Spleen (tissue), 13 donors: ENCODE measurements at regions of chr1 and their contacts with region 1.

Region 1: GRCh38 chr1:218330043-218330623 is 15.0 kb upstream of the TGFB2 start:
- DNase-seq: no peak
- H3K4me3 ChIP-seq: no peak overlapping the region
- H3K27ac ChIP-seq: no peak overlapping the region
- H3K4me1 ChIP-seq: no peaks in the 10 kb centered on the region
- H3K27me3 ChIP-seq: no peaks in the 10 kb centered on the region
- CTCF ChIP-seq: peak; percentile 31 to 79 (median 66)
- POLR2A ChIP-seq: no peak

Region 2: GRCh38 chr1:218281275-218281674 is 48.9 kb before region 1 on chr1:
- intact Hi-C with region 1: no loop called
- DNase-seq: no peak
- H3K4me3 ChIP-seq: no peak overlapping the region
- H3K27ac ChIP-seq: no peak overlapping the region
- H3K4me1 ChIP-seq: peaks cover 5 to 17% (median 13%) of the 10 kb centered on the region in 6 donors
- H3K27me3 ChIP-seq: peaks cover 0 to 8% (median 0%) of the 10 kb centered on the region in 7 donors
- CTCF ChIP-seq: no peak
- POLR2A ChIP-seq: no peak

Region 3: DNA sequence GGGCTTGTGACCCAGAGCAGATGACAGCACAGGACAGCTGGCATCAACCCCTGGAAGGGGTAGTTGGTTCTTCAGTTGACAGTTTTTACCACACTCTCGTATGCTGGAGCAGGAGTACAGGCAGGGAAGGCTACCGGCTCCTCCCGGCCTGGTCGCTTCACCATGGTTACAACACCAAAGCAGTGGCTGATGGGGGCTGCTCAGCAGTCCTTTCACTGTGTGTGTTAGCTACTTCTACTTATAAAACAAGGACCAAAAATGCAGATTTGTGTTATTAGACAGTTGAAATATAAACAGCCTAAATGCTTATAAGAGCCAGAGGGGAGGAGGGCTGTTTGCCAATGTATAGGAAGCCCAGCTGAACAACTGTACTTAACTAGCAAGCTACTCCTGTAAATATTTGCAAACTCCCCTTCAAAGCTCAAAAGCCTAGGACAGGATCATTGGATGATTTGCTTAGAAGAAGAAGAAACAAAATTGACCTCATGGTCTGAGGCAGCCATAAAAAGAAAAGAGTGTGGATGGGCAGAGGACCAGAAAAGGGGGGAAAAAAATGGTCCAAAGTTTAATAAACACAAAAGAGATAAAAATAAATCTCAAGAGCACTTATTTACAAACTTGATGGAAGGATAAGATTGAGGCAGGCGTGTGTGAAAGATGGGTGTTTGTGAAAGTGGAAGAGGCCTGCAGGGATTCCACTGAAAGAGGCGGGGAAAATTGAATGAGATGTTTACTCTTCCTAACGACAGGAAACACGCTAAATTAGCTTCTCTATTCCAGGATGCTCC is 72.1 kb after region 1 on chr1:
- intact Hi-C with region 1: no loop called
- DNase-seq: no peak
- H3K4me3 ChIP-seq: no peak overlapping the region
- H3K27ac ChIP-seq: no peak overlapping the region
- H3K4me1 ChIP-seq: no peaks in the 10 kb centered on the region
- H3K27me3 ChIP-seq: no peaks in the 10 kb centered on the region
- CTCF ChIP-seq: no peak
- POLR2A ChIP-seq: no peak

Region 4: GRCh38 chr1:218521375-218522169 is 191.4 kb after region 1 on chr1:
- intact Hi-C with region 1: no loop called
- DNase-seq: no peak
- H3K4me3 ChIP-seq: no peak overlapping the region
- H3K27ac ChIP-seq: no peak overlapping the region
- H3K4me1 ChIP-seq: no peaks in the 10 kb centered on the region
- H3K27me3 ChIP-seq: peaks cover 0 to 13% (median 0%) of the 10 kb centered on the region in 7 donors
- CTCF ChIP-seq: peak in 10 of 11 experiments; percentile 25 to 71 (median 54)
- POLR2A ChIP-seq: no peak

Region 5: DNA sequence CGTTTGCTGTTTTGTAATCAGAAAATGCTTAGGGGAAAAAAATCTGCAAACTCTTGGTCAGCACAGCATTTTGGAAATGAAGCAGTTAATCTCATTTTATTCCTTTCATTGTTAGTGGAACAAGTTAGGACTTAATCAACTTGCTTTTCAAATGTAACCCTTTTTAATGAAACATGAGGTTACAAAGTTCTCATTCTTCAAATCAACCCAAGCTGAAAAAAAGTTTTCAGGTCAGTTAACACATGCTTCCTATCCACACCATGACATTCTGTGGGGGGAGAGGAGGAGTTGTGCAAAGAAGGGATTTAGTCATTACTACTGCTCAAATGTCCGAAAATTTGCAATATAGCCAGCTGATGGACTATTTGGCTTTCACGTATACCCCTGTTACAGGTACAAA is 560.3 kb after region 1 on chr1:
- intact Hi-C with region 1: no loop called
- DNase-seq: no peak
- H3K4me3 ChIP-seq: no peak overlapping the region
- H3K27ac ChIP-seq: no peak overlapping the region
- H3K4me1 ChIP-seq: no peaks in the 10 kb centered on the region
- H3K27me3 ChIP-seq: no peaks in the 10 kb centered on the region
- CTCF ChIP-seq: no peak
- POLR2A ChIP-seq: no peak

Region 6: GRCh38 chr1:219416594-219417238 is 1086.6 kb after region 1 on chr1:
- intact Hi-C with region 1: loop called (anchors 10 kb)
- DNase-seq: no peak
- H3K4me3 ChIP-seq: no peak overlapping the region
- H3K27ac ChIP-seq: no peak overlapping the region
- H3K4me1 ChIP-seq: no peaks in the 10 kb centered on the region
- H3K27me3 ChIP-seq: no peaks in the 10 kb centered on the region
- CTCF ChIP-seq: peak in 10 of 11 experiments; percentile 29 to 73 (median 60)
- POLR2A ChIP-seq: no peak

Region 7: GRCh38 chr1:219812491-219813203 is 1482.5 kb after region 1 on chr1:
- intact Hi-C with region 1: loop called (anchors 5 kb)
- DNase-seq: no peak
- H3K4me3 ChIP-seq: no peak overlapping the region
- H3K27ac ChIP-seq: no peak overlapping the region
- H3K4me1 ChIP-seq: no peaks in the 10 kb centered on the region
- H3K27me3 ChIP-seq: peaks cover 0 to 18% (median 0%) of the 10 kb centered on the region in 7 donors
- CTCF ChIP-seq: peak; percentile 22 to 71 (median 55)
- POLR2A ChIP-seq: no peak